ENCODE measurements at regions of chr11 and their contacts with region 1.

Region 1: GRCh38 chr11:62394825-62395538 is 23.9 kb upstream of the SCGB1A1 start:
- DNase-seq: peak; percentile 72 to 80
- H3K4me3 ChIP-seq: no peak overlapping the region
- H3K4me3 Mint-ChIP-seq: no peak overlapping the region
- H3K27ac Mint-ChIP-seq: peak overlapping the region; percentile 38
- H3K4me1 ChIP-seq: peaks cover 65% of the 10 kb centered on the region
- H3K4me1 Mint-ChIP-seq: peaks cover 32% of the 10 kb centered on the region
- H3K27me3 ChIP-seq: no peaks in the 10 kb centered on the region
- H3K27me3 Mint-ChIP-seq: no peaks in the 10 kb centered on the region
- CTCF ChIP-seq: peak; percentile 66 to 74

Region 2: DNA sequence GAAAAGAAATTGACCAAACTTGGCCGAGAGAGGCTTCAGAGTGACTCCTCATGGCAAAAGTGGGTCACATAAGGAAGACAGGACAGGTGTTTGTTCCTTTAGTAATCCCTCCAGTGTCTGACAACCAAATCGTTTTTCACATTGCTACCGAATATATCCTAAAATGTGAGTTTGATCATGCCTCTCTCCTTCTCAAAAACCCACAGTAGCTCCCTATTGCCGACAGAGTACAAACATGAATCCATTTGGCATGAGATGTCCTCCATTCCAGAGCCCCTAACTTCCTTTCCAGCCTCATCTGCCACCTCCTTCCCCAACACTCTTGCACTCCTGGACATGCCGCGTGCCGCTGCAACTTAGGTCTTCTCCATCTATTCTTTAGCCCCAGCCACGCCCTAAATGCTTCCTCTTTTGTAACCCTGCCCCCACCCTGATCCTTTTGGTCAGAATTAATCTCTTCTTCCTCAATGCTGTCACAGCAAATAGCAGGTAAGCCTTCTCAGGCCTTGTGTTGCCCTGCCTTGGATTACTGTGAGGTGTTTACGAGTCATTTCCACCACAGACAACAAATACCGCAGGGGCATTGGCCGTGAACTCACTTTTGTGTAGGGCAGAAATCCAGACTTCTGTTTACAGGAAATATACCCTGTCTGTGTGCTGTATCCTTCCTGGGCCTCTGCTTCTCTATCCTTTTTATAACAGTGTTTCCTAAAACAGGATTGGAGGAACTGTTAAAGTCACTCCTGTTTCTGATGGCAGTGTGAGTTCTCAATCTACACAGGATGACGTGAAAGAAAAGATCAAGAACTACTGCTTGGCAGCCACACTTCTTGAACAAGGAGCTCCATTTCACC is 361.6 kb before region 1 on chr11:
- CTCF ChIA-PET with region 1: no interaction called
- POLR2A ChIA-PET with region 1: no interaction called
- intact Hi-C with region 1: no loop called
- DNase-seq: no peak
- H3K4me3 ChIP-seq: no peak overlapping the region
- H3K4me3 Mint-ChIP-seq: no peak overlapping the region
- H3K27ac Mint-ChIP-seq: no peak overlapping the region
- H3K4me1 ChIP-seq: no peaks in the 10 kb centered on the region
- H3K4me1 Mint-ChIP-seq: no peaks in the 10 kb centered on the region
- H3K27me3 ChIP-seq: no peaks in the 10 kb centered on the region
- H3K27me3 Mint-ChIP-seq: no peaks in the 10 kb centered on the region
- CTCF ChIP-seq: no peak

Region 3: GRCh38 chr11:62269650-62270278 is 125.2 kb before region 1 on chr11 and contains the start of gene SCGB2A2:
- CTCF ChIA-PET with region 1: no interaction called
- POLR2A ChIA-PET with region 1: no interaction called
- intact Hi-C with region 1: no loop called
- DNase-seq: peak in 1 of 2 experiments; percentile 8
- H3K4me3 ChIP-seq: no peak within 1 kb of the TSS
- H3K4me3 Mint-ChIP-seq: no peak within 1 kb of the TSS
- H3K27ac Mint-ChIP-seq: no peak within 1 kb of the TSS
- H3K4me1 ChIP-seq: no peaks in the 10 kb centered on the region
- H3K4me1 Mint-ChIP-seq: no peaks in the 10 kb centered on the region
- H3K27me3 ChIP-seq: no peaks in the 10 kb centered on the region; the same call in 1 of the 2 replicates
- H3K27me3 Mint-ChIP-seq: peaks cover 17% of the 10 kb centered on the region
- CTCF ChIP-seq: peak; percentile 17 to 44
- total RNA-seq, gene SCGB2A2: not detected in 2 replicates

Region 4: GRCh38 chr11:62383822-62384221 is 11.2 kb before region 1 on chr11:
- CTCF ChIA-PET with region 1: interaction called, 10 read pairs
- POLR2A ChIA-PET with region 1: no interaction called
- intact Hi-C with region 1: loop called (anchors 1 kb)
- DNase-seq: no peak
- H3K4me3 ChIP-seq: no peak overlapping the region
- H3K4me3 Mint-ChIP-seq: no peak overlapping the region
- H3K27ac Mint-ChIP-seq: no peak overlapping the region
- H3K4me1 ChIP-seq: peaks cover 24% of the 10 kb centered on the region
- H3K4me1 Mint-ChIP-seq: peaks cover 21% of the 10 kb centered on the region
- H3K27me3 ChIP-seq: no peaks in the 10 kb centered on the region
- H3K27me3 Mint-ChIP-seq: no peaks in the 10 kb centered on the region
- CTCF ChIP-seq: no peak

Region 5: DNA sequence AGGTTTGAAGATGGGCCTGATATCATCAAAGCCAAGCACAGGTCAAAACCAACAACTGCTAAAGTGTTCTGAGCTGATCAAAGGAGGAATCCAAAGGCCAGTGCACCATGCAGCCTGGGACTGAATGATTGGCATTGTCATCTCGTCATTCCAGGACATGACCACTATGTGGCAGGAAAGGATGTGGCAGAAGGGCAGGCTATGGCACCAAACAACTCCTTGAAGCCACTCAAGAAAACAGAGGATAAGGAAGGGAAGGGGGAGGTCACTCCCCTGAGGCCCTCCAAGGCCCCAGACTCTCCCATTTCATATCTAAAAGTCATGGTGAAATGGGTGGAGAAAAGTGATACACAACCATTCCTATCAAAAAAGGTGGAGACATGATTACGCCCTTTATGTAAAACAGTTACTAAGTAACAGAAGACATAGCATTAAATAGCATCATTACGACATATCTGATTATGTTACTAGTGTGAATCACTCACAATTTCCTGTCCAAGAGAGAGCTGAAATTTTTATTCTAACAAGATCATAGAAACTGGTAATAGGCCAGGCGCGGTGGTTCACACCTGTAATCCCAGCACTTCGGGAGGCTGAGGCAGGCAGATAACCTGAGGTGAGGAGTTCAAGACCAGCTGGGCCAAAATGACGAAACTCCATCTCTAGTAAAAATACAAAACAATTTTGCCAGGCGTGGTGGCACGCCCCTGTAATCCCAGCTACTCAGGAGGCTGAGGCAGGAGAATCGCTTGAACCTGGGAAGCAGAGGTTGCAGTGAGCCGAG is 102.3 kb after region 1 on chr11:
- CTCF ChIA-PET with region 1: interaction called, 3 read pairs
- POLR2A ChIA-PET with region 1: no interaction called
- intact Hi-C with region 1: loop called (anchors 2 kb)
- DNase-seq: peak; percentile 75 to 82
- H3K4me3 ChIP-seq: no peak overlapping the region
- H3K4me3 Mint-ChIP-seq: no peak overlapping the region
- H3K27ac Mint-ChIP-seq: peak overlapping the region; percentile 76
- H3K4me1 ChIP-seq: peaks cover 48% of the 10 kb centered on the region
- H3K4me1 Mint-ChIP-seq: peaks cover 33% of the 10 kb centered on the region
- H3K27me3 ChIP-seq: no peaks in the 10 kb centered on the region
- H3K27me3 Mint-ChIP-seq: no peaks in the 10 kb centered on the region
- CTCF ChIP-seq: peak; percentile 59 to 68

Region 6: GRCh38 chr11:62551696-62552250 is 156.8 kb after region 1 on chr11:
- CTCF ChIA-PET with region 1: interaction called, 14 read pairs
- POLR2A ChIA-PET with region 1: no interaction called
- intact Hi-C with region 1: no loop called
- DNase-seq: peak; percentile 74 to 77
- H3K4me3 ChIP-seq: no peak overlapping the region
- H3K4me3 Mint-ChIP-seq: peak overlapping the region; percentile 71
- H3K27ac Mint-ChIP-seq: peak overlapping the region; percentile 96
- H3K4me1 ChIP-seq: peaks cover 87% of the 10 kb centered on the region
- H3K4me1 Mint-ChIP-seq: peaks cover 61% of the 10 kb centered on the region
- H3K27me3 ChIP-seq: no peaks in the 10 kb centered on the region
- H3K27me3 Mint-ChIP-seq: no peaks in the 10 kb centered on the region
- CTCF ChIP-seq: no peak

Region 7: GRCh38 chr11:62671575-62672389 is 276.8 kb after region 1 on chr11 and contains the starts of genes LBHD1 and UQCC3:
- CTCF ChIA-PET with region 1: no interaction called
- POLR2A ChIA-PET with region 1: no interaction called
- intact Hi-C with region 1: loop called (anchors 10 kb)
- DNase-seq: peak; percentile 87 to 91
- H3K4me3 ChIP-seq: peak within 1 kb of the TSS; percentile 90
- H3K4me3 Mint-ChIP-seq: peak within 1 kb of the TSS; percentile 98
- H3K27ac Mint-ChIP-seq: peak within 1 kb of the TSS; percentile 99
- H3K4me1 ChIP-seq: peaks cover 27% of the 10 kb centered on the region
- H3K4me1 Mint-ChIP-seq: peaks cover 15% of the 10 kb centered on the region
- H3K27me3 ChIP-seq: no peaks in the 10 kb centered on the region
- H3K27me3 Mint-ChIP-seq: no peaks in the 10 kb centered on the region
- CTCF ChIP-seq: no peak
- total RNA-seq, gene LBHD1: 11.9 and 13.6 TPM in 2 replicates
- total RNA-seq, gene UQCC3: 23.9 and 24.0 TPM in 2 replicates

Measured in Caco-2 (cell line).